ENCODE measurements at regions of chr1 and their contacts with region 1.

Region 1: GRCh38 chr1:78132174-78132947 is 86.6 kb downstream of the GIPC2 start:
- DNase-seq: no peak
- ATAC-seq: no peak
- H3K4me3 ChIP-seq: no peak overlapping the region
- H3K27ac ChIP-seq: no peak overlapping the region
- H3K4me1 ChIP-seq: no peaks in the 10 kb centered on the region
- H3K27me3 ChIP-seq: no peaks in the 10 kb centered on the region
- CTCF ChIP-seq: no peak
- POLR2A ChIP-seq: no peak

Region 2: GRCh38 chr1:77406661-77407060 is 725.7 kb before region 1 on chr1:
- intact Hi-C with region 1: no loop called
- DNase-seq: no peak
- ATAC-seq: no peak
- H3K4me3 ChIP-seq: no peak overlapping the region
- H3K27ac ChIP-seq: no peak overlapping the region
- H3K4me1 ChIP-seq: no peaks in the 10 kb centered on the region
- H3K27me3 ChIP-seq: no peaks in the 10 kb centered on the region
- CTCF ChIP-seq: no peak
- POLR2A ChIP-seq: no peak

Region 3: DNA sequence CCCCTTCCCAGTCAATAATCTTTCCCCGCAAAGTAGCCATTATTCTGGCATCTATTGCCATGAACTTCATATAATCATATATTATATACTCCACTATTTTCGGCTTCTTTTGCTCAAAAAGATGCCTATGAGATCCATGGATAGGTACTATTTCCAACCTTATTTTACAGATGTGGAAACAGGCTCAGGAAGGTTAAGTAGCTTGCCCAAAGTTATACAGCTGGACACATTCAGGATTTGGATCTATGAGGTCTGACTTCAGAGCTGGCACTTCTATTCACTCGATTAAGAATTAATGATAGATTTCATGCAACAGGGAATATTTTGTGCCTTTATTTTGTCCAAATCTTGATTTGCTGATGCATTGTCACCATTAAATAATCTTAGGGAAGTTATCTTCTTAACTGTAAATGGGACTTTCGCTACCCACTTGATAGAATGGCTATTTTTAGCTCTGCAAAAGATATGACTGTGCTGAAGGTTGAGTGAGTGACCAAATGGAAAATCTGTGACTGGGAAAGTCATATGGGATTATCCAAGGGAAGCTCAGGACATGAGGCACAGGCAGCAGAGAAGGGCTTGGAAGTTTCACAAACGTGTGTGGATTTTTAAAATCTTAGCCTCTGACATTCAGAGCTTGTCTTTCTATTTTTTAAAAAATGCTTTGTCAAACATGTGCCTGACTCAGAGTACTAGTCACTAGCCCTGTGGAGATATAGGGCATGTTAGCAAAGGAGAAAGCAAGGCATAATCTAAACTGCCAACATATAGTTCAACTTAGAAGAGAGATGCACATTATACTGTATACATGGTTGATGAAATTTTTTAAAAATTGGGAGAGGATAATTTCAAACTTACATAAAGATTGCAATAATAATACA is 50.1 kb before region 1 on chr1:
- intact Hi-C with region 1: no loop called
- DNase-seq: no peak
- ATAC-seq: peak in 1 of 4 donors; percentile 39
- H3K4me3 ChIP-seq: no peak overlapping the region
- H3K27ac ChIP-seq: no peak overlapping the region
- H3K4me1 ChIP-seq: peaks cover 0 to 6% (median 0%) of the 10 kb centered on the region in 4 donors
- H3K27me3 ChIP-seq: no peaks in the 10 kb centered on the region
- CTCF ChIP-seq: no peak
- POLR2A ChIP-seq: no peak

Region 4: DNA sequence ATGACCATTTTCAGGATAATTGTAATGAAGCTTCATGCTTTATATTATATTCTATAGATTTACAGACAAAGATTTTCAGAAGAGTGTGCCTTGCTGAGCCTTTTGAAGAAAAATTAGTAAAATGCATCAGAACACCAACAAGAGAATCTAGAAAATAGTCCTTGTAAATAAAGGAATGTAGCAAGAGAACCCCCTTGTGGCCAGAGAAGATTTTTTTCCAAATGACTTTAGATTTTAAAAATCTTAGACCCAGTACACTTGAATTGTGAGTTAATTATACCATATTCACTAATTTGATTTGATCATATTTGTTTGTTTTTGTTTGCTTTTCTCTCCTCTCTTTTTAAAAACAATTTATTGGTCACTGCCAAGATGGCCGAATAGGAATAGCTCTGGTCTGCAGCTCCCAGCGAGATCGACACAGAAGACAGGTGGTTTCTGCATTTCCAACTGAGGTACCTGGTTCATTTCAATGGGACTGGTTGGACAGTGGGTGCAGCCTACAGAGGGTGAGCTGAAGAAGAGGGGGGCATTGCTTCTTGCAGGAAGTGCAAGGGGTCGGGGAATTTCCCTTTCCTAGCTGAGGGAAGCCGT is 475.1 kb after region 1 on chr1:
- intact Hi-C with region 1: loop called in 1 of 2 experiments (anchors 10 kb)
- DNase-seq: no peak
- ATAC-seq: peak in 3 of 4 donors; percentile 45 to 63 (median 56)
- H3K4me3 ChIP-seq: no peak overlapping the region
- H3K27ac ChIP-seq: no peak overlapping the region
- H3K4me1 ChIP-seq: no peaks in the 10 kb centered on the region
- H3K27me3 ChIP-seq: no peaks in the 10 kb centered on the region
- CTCF ChIP-seq: peak; percentile 57 to 70 (median 68)
- POLR2A ChIP-seq: no peak

Measured in right lobe of liver (tissue), 6 donors.